Gastrocnemius medialis (tissue), 4 donors: ENCODE measurements at regions of chr12 and their contacts with region 1.

Region 1: DNA sequence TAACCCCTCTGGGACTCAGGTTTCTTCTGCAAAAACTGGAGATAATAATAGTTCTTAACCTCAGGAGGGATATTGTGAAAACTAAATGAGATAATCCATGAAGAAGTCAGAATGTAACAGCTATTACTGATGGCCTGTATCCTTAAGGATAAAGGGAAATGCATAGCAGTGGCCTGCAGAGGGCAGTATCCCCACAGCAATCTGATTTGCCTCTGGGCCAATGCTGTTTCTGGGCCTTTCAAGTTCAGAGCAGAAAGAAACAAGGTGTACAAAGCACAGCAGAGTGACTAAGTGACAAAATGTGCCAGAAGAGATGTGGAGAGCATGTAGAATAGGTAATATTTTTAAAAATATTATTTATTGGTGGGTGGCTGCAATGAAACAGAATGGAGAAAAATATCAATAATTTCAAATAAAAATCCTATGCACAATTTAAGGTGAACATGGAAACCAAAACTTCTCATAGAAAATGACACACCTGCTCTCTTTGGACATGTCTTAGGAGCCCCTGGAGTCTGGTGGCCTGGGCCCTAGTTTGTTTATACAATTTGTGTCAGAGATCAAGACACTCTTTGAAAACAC is 90.3 kb downstream of the C12orf75 start:
- DNase-seq: peak; percentile 55 to 73
- ATAC-seq: peak; percentile 91 to 94
- H3K4me3 ChIP-seq: no peak overlapping the region
- H3K27ac ChIP-seq: peak overlapping the region in 1 of 4 donors; percentile 10
- H3K4me1 ChIP-seq: peaks cover 0 to 6% of the 10 kb centered on the region in 2 donors
- H3K27me3 ChIP-seq: no peaks in the 10 kb centered on the region
- CTCF ChIP-seq: peak; percentile 83 to 96 (median 90)
- POLR2A ChIP-seq: no peak

Region 2: DNA sequence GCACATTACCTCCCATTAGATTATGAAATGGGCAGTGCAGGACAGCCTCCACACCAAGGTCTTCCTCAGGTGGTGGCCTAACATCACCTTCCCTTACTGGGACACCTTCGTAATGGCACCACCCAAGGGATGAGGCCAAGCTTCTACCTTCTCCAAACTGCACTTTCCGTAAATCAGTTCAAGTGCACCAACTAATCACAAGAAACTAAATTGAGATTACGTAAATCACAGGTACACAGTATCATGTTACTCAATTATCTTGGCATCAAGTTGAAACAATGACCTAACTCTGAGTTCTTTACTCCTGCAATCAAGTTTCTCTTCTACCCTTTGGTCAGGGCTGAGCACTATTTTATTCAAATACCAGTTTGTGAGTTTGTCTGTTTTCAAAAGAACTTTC is 476.5 kb before region 1 on chr12:
- in situ Hi-C with region 1: no loop called
- intact Hi-C with region 1: no loop called
- DNase-seq: no peak
- ATAC-seq: no peak
- H3K4me3 ChIP-seq: no peak overlapping the region
- H3K27ac ChIP-seq: no peak overlapping the region
- H3K4me1 ChIP-seq: no peaks in the 10 kb centered on the region
- H3K27me3 ChIP-seq: peaks cover 0 to 7% (median 0%) of the 10 kb centered on the region in 3 donors
- CTCF ChIP-seq: no peak
- POLR2A ChIP-seq: no peak

Region 3: DNA sequence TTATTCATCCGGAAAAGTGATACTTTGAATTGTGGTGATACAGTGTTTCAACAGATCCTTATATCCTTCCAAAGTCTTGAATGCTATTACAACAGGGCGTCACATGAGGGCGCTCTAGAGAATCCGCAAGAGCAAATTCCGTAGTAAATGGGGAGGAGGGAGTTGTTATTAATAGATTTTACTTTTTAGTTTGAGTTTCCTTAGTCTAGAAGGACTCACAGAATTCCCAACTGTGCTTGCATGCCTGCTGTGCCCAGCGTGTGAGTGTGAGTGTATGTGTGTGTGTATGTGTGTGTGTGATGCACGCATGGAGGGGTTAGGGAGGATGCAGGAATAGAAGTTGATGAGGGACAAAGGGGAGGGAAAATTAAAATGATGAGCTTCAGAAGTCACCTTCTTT is 285.0 kb after region 1 on chr12:
- in situ Hi-C with region 1: no loop called
- intact Hi-C with region 1: loop called (anchors 2 kb)
- DNase-seq: peak in 1 of 2 donors; percentile 41
- ATAC-seq: peak; percentile 53 to 56
- H3K4me3 ChIP-seq: no peak overlapping the region
- H3K27ac ChIP-seq: peak overlapping the region; percentile 73 to 85 (median 76)
- H3K4me1 ChIP-seq: peaks cover 17 to 22% of the 10 kb centered on the region in 2 donors
- H3K27me3 ChIP-seq: no peaks in the 10 kb centered on the region
- CTCF ChIP-seq: peak; percentile 56 to 75 (median 73)
- POLR2A ChIP-seq: no peak

Region 4: DNA sequence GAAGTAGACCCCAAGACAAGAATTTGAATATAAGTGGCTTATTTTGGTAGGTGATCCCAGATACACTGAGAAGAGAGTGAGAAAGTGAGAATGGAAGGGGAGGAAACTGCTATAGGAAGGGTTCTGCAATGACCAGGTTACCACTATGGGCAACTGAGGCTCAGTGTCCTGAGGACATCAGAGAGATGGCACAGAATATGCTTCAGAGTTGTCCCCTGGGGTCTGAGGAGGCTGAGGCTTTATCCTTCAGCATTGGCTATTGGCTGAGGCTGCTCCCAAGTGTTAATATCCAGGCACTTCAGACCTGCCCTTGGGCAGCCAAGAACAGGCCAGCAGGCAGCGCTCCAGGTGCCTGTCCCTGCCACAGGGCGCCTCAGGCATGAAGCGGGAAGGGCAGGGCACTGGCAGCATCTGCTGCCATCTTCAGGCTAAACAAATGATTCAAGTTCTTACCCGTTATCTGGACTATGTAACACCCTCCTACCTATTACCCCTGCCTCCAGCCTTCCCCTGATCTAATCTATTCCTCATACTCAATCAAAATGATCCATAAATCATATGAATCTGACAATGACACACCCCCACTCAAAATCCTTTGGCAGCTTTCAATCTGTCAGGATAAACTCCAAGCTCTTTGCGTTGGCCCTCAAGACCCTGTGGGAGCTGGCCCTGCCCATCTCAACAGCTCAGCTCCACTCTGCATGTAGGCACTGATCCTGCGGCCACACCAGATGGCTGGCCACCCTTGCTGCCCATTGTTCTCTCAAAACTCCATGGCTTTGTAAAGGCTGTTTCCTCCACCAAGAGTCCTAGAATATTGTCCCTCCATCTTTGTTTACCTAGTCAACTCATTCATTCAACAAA is 784.7 kb after region 1 on chr12:
- in situ Hi-C with region 1: loop called in 1 of 4 experiments (anchors 5 kb)
- intact Hi-C with region 1: loop called (anchors 5 kb)
- DNase-seq: peak; percentile 71 to 82
- ATAC-seq: peak; percentile 87 to 97
- H3K4me3 ChIP-seq: no peak overlapping the region
- H3K27ac ChIP-seq: peak overlapping the region; percentile 5 to 65 (median 36)
- H3K4me1 ChIP-seq: peaks cover 3 to 16% of the 10 kb centered on the region in 2 donors
- H3K27me3 ChIP-seq: no peaks in the 10 kb centered on the region
- CTCF ChIP-seq: peak; percentile 36 to 69 (median 49)
- POLR2A ChIP-seq: no peak

Region 5: DNA sequence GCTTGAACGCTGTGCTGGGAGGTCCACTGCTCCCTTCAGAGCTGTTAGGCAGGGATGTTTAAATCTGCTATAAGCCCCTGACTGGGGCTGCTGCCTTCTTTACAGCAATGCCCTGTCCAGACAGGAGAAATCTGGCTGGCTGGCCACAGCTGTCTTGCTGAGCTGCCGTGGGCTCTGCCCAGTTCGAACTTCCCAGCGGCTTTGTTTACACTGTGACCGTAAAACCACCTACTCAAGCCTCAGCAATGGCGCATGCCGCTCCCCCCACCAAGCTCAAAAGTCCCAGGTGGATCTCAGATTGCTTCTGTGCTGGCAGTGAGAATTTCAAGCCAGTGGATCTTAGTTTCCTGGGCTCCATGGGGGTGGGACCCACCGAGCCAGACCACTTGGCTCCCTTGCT is 791.2 kb after region 1 on chr12:
- in situ Hi-C with region 1: loop called in 1 of 4 experiments (anchors 5 kb)
- intact Hi-C with region 1: loop called (anchors 5 kb)
- DNase-seq: no peak
- ATAC-seq: no peak
- H3K4me3 ChIP-seq: no peak overlapping the region
- H3K27ac ChIP-seq: no peak overlapping the region
- H3K4me1 ChIP-seq: no peaks in the 10 kb centered on the region
- H3K27me3 ChIP-seq: no peaks in the 10 kb centered on the region
- CTCF ChIP-seq: no peak
- POLR2A ChIP-seq: no peak

Region 6: GRCh38 chr12:106223485-106224354 is 803.0 kb after region 1 on chr12:
- in situ Hi-C with region 1: loop called in 3 of 4 experiments (anchors 5 to 10 kb)
- intact Hi-C with region 1: loop called (anchors 1 kb)
- DNase-seq: peak; percentile 45 to 65
- ATAC-seq: peak; percentile 57 to 75
- H3K4me3 ChIP-seq: no peak overlapping the region
- H3K27ac ChIP-seq: no peak overlapping the region
- H3K4me1 ChIP-seq: peaks cover 8 to 17% of the 10 kb centered on the region in 2 donors
- H3K27me3 ChIP-seq: no peaks in the 10 kb centered on the region
- CTCF ChIP-seq: peak; percentile 82 to 97 (median 91)
- POLR2A ChIP-seq: no peak

Region 7: DNA sequence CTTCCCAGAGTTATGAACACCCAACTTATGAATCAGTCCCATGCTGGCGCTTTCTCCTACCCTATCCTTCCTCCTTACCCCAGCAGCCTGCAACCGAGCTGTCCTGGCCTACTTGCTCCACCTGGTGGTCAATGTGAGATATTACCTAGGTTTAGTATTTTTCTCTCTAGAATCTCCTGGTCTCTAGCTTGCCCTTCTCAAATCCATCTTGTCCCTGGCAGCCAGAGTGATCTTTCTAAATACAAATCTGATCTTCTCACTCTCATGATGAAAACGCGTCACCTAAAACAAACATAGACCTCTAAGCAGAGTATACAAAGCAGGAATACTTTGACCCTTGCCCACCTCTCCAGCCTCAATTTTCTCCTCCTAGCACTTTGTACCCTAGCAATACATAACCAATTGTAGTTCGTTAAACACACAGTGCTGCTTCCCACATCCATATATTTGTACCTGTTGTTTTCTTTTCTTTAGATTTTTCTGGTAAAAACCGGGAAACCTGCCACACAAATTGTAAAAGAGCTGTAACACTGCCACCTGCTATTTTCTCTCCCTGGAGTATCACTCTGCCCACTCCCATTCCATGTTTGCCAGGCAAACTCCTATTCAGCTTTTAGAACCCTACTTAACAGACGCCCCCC is 861.8 kb after region 1 on chr12:
- in situ Hi-C with region 1: no loop called
- intact Hi-C with region 1: loop called (anchors 5 kb)
- DNase-seq: peak in 1 of 2 donors; percentile 28
- ATAC-seq: peak; percentile 36 to 79
- H3K4me3 ChIP-seq: no peak overlapping the region
- H3K27ac ChIP-seq: no peak overlapping the region
- H3K4me1 ChIP-seq: peaks cover 0 to 5% of the 10 kb centered on the region in 2 donors
- H3K27me3 ChIP-seq: no peaks in the 10 kb centered on the region
- CTCF ChIP-seq: peak; percentile 66 to 75 (median 70)
- POLR2A ChIP-seq: no peak